Activated CD4-positive, alpha-beta T cell treated with anti-CD3 and anti-CD28 coated beads, Interleukin-2, amount 10 ng/mL, durations not matched to agents 24 days and 14 days (primary cell): ENCODE measurements at regions of chr19 and their contacts with region 1.

Region 1: DNA sequence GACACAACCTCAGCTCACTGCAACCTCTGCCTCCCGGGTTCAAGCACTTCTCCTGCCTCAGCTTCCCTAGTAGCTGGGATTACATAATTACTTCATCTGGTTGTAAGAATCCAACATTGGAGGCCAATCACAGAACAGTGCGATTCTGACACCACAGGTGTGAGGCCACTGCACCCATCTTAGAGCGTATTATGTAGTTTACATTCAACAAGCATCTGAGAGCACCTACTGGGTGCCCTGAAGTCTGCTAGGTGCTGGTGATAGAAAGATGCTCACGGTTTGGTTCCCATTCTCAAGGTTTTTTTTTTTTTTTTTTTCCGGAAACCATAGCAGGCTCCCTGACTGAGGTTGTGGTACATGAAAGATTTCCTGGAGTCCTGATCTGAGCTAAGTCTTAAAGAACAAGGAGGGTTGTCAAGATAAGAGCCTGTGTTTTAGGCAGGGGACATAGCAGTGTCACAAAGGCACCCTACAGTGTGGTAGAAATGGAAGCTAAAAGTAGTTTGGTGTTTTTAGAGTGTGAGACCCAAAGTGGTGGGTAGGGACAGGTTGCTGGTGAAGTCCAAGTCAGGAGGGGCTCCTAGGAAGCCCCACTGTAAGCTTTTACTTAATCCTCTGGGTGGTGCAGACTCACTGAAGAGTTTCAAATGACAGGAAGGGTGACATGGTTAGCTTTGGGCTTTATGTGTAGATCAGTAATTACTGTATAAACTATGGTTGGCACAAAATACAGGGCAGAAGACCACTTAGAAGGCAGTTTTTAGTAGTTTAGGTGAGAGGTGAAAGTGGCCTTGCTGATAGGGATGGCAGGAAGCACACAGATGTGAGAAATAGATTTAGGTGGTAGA is 15.2 kb downstream of the SAE1 start:
- DNase-seq: peak; percentile 75
- H3K4me3 Mint-ChIP-seq: peak overlapping the region; percentile 62
- H3K27ac Mint-ChIP-seq: peak overlapping the region; percentile 76
- H3K4me1 Mint-ChIP-seq: peaks cover 50% of the 10 kb centered on the region
- H3K27me3 Mint-ChIP-seq: no peaks in the 10 kb centered on the region

Region 2: DNA sequence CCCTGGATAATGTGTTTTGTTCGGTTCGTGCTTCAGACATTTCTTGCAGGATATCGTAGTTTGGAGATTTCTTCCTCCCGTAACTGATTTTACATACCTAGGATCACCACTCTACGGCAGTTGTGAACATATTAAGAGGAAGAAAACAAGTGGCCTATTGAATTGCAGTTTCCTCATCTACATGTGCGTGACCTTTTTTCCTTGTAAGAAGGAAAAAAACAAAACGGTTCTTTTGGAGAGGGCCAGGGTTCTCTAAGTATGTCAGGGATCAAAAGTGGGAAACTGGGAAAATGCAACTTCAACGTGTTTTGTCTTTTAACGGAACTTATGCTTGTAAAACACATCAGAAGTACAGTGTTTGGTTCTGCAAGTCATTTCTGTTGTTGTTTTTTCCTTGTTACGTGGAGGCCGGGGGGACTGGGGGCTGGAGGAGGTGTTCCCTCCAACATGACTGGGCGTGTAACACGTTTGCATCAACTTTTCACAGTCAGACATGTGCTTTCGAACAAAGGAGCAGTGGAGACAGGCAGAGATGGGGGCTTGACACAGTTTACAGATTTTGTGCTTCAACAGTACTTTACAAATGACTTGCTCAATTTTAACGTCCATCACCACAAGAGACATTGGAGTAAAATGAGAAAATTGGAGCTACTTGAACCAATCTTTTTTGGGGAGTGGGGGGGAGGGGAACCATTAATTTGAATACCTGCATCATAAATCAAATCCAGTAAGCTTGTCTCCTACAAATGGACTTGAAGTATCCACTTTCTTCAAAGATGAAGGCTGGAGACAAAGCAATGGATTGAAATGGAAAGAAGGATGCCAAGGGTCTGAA is 36.1 kb before region 1 on chr19:
- intact Hi-C with region 1: no loop called
- DNase-seq: peak; percentile 89
- H3K4me3 Mint-ChIP-seq: peak overlapping the region; percentile 96
- H3K27ac Mint-ChIP-seq: peak overlapping the region; percentile 100
- H3K4me1 Mint-ChIP-seq: peaks cover 60% of the 10 kb centered on the region
- H3K27me3 Mint-ChIP-seq: no peaks in the 10 kb centered on the region

Region 3: DNA sequence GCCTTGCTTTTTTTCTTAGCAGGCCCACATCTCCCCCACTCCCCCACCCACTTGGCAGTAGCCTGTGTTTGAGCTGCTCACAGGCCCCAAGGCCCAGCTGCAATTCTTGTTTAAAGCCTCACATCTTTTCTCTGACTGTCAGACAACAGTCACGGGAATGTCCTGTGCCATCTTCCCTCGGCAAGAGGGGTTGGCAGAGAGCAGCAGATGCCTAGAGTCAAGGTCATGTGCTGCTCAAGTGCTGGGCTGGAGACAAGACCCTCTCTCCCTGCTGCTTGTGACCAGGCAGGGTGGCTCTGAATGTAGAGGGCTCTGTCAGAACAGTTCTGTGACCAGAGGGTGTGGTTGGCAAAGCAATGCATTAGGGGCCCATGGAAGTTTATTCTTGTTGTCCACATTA is 37.7 kb after region 1 on chr19:
- intact Hi-C with region 1: loop called (anchors 5 kb)
- DNase-seq: no peak
- H3K4me3 Mint-ChIP-seq: peak overlapping the region; percentile 27
- H3K27ac Mint-ChIP-seq: peak overlapping the region; percentile 80
- H3K4me1 Mint-ChIP-seq: peaks cover 64% of the 10 kb centered on the region
- H3K27me3 Mint-ChIP-seq: no peaks in the 10 kb centered on the region